Right ventricle myocardium inferior (tissue), 1 donor: ENCODE measurements at regions of chr5 and their contacts with region 1.

Region 1: GRCh38 chr5:31702709-31703108 is 63.8 kb downstream of the PDZD2 start:
- DNase-seq: no peak
- ATAC-seq: peak; percentile 37

Region 2: GRCh38 chr5:31781772-31782171 is 79.1 kb after region 1 on chr5:
- intact Hi-C with region 1: loop called (anchors 5 kb)
- DNase-seq: no peak
- ATAC-seq: no peak